A673 (cell line): ENCODE measurements at regions of chr2 and their contacts with region 1.

Region 1: DNA sequence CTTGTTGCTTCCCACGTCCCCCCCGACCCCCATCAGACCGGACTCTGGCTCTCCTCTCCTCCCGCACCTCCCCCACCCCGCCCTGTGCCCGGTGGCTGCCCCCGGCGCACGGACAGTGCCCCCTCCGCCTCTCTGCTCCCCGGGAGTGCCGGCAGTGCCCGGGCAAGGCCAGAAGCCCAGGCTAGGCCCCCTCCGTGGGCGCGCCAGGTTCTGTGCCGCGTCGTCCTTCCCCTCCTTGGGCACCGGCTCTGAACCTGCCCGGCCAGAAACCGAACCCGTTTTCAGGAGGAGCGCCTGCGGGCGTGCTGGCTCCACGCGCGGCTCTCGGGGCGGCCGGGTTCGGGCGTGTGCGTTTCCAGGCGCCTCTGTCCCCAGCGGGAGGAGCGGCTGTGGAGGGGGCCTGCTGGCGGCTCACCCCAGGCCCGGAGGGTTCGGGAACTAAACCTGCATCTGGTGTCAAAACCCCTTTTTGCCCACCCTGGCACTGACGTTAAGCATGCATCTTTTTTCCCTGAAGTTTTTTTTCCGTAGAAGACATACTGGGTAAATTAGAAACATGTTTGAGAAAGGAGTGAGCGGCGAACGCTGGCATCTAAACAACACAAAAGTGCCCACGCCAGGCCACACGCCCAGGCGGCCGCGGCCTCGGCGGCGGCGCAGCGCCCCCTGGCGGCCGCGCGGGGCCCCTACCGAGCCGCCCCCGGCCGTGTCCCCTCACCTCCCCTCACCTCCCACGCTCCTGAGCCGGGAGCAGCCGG is 123.9 kb upstream of the SLC1A4 start:
- DNase-seq: peak; percentile 80
- H3K4me3 ChIP-seq: peak overlapping the region; percentile 61
- H3K27ac ChIP-seq: peak overlapping the region; percentile 84
- H3K4me1 ChIP-seq: peaks cover 12% of the 10 kb centered on the region
- H3K27me3 ChIP-seq: no peaks in the 10 kb centered on the region
- CTCF ChIP-seq: peak; percentile 63; the same call in 1 of the 2 replicates

Region 2: GRCh38 chr2:64330281-64331113 is 534.8 kb before region 1 on chr2:
- CTCF ChIA-PET with region 1: no interaction called
- POLR2A ChIA-PET with region 1: no interaction called
- intact Hi-C with region 1: loop called (anchors 5 kb)
- DNase-seq: peak; percentile 88
- H3K4me3 ChIP-seq: peak overlapping the region; percentile 28
- H3K27ac ChIP-seq: no peak overlapping the region
- H3K4me1 ChIP-seq: no peaks in the 10 kb centered on the region
- H3K27me3 ChIP-seq: no peaks in the 10 kb centered on the region
- CTCF ChIP-seq: peak; percentile 91

Region 3: DNA sequence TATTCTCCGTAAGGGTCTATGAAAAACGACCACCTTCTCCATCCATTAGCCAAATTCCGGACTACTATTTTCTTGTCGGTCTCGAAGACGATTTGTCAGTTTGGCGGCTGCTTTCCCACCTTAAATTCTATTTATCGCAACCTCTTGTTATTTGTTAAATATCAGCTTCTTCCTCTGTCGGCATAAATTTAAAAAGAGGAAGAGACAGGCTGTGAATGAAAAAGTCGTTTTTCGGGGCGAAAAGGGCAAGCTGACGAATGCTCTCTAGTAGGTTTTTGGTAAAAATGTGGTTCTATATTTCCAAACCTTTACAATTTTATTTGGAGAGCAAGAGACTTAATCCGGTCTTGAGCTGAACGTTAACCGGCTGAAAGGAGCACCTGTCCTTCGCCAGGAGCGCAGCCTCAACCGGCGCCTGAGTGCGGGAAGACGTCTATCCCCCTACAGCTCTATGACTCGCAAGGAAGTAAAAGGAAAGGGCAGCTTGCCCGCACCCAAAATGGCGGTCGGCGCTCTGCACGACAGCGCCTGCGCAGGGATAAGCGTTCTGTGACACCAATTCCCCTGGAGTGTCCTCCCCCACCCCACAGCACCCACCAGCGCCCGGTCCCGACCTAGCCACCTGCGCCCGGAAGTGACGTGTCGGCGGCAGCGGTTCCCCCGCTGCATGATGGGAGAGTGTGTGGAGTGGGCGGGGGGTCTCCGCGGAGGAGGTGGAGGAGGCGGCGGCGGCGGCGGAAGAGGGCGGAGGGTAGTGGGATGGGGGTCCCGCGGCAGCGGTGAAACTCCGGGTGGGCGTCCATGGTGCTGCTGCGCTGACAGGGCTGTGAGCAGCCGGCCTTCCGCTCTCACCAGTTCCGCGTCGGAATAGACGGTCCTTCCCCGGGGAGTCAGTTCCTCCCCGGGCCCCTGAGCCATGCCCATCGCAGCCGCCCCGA is 341.3 kb before region 1 on chr2 and contains the start of gene AFTPH:
- CTCF ChIA-PET with region 1: interaction called, 4 read pairs
- POLR2A ChIA-PET with region 1: no interaction called
- intact Hi-C with region 1: loop called (anchors 5 kb)
- DNase-seq: peak; percentile 99
- H3K4me3 ChIP-seq: peak within 1 kb of the TSS; percentile 94
- H3K27ac ChIP-seq: peak within 1 kb of the TSS; percentile 84
- H3K4me1 ChIP-seq: peaks cover 16% of the 10 kb centered on the region
- H3K27me3 ChIP-seq: no peaks in the 10 kb centered on the region
- CTCF ChIP-seq: 0 out of 2 replicates have a peak, but pooled peaks have one; percentile 7
- total RNA-seq, gene AFTPH: 18.8 and 19.5 TPM in 2 replicates

Region 4: DNA sequence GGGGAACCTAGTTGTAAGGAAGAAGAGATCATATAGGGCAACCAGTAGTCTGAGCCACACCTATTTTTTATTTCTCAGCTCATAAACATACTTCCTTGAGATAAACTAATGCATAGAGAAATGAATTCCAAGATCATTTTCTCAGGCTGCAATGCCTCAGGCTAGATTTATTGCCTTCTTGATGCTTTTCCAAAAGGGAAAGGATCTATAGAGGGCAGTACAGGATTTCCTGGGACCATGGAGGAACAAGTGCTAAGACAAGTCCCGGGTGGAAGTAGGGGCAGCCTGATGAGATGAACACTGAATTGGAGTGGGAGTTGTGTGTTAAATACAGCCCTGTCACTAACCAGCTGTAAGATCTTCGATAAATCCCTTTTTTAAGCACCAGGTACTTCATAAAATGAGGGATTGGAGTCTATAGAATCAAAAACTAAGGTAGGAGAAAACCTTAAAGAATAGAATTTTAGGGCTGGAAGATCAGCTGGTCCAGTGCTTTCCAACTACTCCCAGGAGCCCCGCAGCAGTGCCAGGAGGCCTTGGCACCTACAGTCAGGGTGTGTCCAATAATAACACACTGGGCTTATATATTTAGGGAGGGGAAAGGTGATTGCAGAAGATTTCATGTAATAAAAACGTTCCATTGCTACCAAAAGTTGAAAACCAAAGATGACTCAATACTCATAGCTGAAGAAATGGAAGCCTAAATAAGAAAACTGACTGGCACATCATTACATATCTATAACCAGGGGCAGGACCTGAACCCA is 269.7 kb before region 1 on chr2:
- CTCF ChIA-PET with region 1: no interaction called
- POLR2A ChIA-PET with region 1: no interaction called
- intact Hi-C with region 1: loop called (anchors 2 kb)
- DNase-seq: peak; percentile 47
- H3K4me3 ChIP-seq: no peak overlapping the region
- H3K27ac ChIP-seq: no peak overlapping the region
- H3K4me1 ChIP-seq: no peaks in the 10 kb centered on the region
- H3K27me3 ChIP-seq: no peaks in the 10 kb centered on the region
- CTCF ChIP-seq: peak; percentile 57

Region 5: GRCh38 chr2:64786343-64787015 is 78.8 kb before region 1 on chr2:
- CTCF ChIA-PET with region 1: no interaction called
- POLR2A ChIA-PET with region 1: interaction called, 31 read pairs
- intact Hi-C with region 1: no loop called
- DNase-seq: no peak
- H3K4me3 ChIP-seq: no peak overlapping the region
- H3K27ac ChIP-seq: no peak overlapping the region
- H3K4me1 ChIP-seq: no peaks in the 10 kb centered on the region
- H3K27me3 ChIP-seq: no peaks in the 10 kb centered on the region
- CTCF ChIP-seq: no peak